ENCODE measurements at regions of chr5 and their contacts with region 1.

Region 1: DNA sequence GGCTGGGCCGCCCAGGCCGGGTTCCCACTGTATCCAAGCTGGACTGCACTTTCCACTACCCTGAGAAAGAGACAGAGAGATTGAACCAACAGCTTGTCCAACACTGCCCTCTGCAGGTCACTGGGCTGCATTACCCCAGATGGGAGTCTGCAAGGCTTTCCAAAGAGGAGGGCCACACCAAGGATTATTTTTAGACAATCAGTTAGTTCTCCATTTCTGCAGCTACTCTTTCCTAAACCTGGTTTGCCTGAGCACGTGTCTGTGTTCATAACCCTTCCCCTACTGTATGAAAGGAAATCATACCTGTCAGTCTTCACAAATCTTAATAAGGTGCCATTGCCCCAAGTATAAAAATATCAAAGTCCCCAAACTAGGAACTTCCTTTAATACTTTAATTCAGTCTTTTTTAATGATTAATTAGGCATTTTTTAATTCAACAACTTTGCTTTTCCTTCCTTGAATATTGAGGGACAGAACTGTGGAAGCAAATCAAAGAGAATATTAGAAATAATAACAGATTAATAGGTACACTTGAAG is 13.4 kb upstream of the FGF1 start:
- DNase-seq: peak; percentile 84 to 90
- H3K4me3 ChIP-seq: no peak overlapping the region
- H3K4me3 Mint-ChIP-seq: no peak overlapping the region
- H3K27ac Mint-ChIP-seq: no peak overlapping the region
- H3K4me1 ChIP-seq: no peaks in the 10 kb centered on the region
- H3K4me1 Mint-ChIP-seq: no peaks in the 10 kb centered on the region
- H3K27me3 ChIP-seq: no peaks in the 10 kb centered on the region; the same call in none of the 2 replicates
- H3K27me3 Mint-ChIP-seq: peaks cover 7% of the 10 kb centered on the region
- CTCF ChIP-seq: peak; percentile 93 to 97

Region 2: DNA sequence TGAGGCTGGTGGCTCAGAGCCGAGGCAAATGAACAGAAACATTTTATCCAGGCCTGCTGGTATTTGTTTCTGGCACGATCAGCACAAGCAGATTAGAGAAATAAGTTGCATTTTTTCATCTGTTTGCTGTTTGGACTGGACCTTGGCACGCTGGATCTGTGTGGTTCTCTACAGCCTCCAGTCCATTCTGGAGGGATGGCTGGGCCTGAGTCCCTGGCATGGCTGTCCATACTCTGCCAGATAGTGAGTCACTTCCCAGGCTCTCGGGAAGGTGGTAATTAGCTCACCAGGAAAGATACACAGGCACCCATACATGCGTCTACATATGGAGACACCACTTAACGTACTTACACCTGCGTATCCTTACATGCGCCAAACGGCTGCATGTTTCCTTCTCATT is 453.0 kb before region 1 on chr5:
- CTCF ChIA-PET with region 1: no interaction called
- POLR2A ChIA-PET with region 1: no interaction called
- intact Hi-C with region 1: no loop called
- DNase-seq: no peak
- H3K4me3 ChIP-seq: no peak overlapping the region
- H3K4me3 Mint-ChIP-seq: no peak overlapping the region
- H3K27ac Mint-ChIP-seq: no peak overlapping the region
- H3K4me1 ChIP-seq: peaks cover 9% of the 10 kb centered on the region; the same call in 1 of the 2 replicates
- H3K4me1 Mint-ChIP-seq: peaks cover 5% of the 10 kb centered on the region
- H3K27me3 ChIP-seq: no peaks in the 10 kb centered on the region
- H3K27me3 Mint-ChIP-seq: no peaks in the 10 kb centered on the region
- CTCF ChIP-seq: no peak

Region 3: GRCh38 chr5:142611154-142611553 is 88.1 kb before region 1 on chr5:
- CTCF ChIA-PET with region 1: interaction called, 13 read pairs
- POLR2A ChIA-PET with region 1: no interaction called
- intact Hi-C with region 1: loop called (anchors 1 kb)
- DNase-seq: peak; percentile 73 to 78
- H3K4me3 ChIP-seq: no peak overlapping the region
- H3K4me3 Mint-ChIP-seq: no peak overlapping the region
- H3K27ac Mint-ChIP-seq: no peak overlapping the region
- H3K4me1 ChIP-seq: no peaks in the 10 kb centered on the region
- H3K4me1 Mint-ChIP-seq: no peaks in the 10 kb centered on the region
- H3K27me3 ChIP-seq: no peaks in the 10 kb centered on the region
- H3K27me3 Mint-ChIP-seq: peaks cover 12% of the 10 kb centered on the region
- CTCF ChIP-seq: peak; percentile 85 to 94

Measured in Caco-2 (cell line).